ENCODE measurements at regions of chr3 and their contacts with region 1.

Region 1: DNA sequence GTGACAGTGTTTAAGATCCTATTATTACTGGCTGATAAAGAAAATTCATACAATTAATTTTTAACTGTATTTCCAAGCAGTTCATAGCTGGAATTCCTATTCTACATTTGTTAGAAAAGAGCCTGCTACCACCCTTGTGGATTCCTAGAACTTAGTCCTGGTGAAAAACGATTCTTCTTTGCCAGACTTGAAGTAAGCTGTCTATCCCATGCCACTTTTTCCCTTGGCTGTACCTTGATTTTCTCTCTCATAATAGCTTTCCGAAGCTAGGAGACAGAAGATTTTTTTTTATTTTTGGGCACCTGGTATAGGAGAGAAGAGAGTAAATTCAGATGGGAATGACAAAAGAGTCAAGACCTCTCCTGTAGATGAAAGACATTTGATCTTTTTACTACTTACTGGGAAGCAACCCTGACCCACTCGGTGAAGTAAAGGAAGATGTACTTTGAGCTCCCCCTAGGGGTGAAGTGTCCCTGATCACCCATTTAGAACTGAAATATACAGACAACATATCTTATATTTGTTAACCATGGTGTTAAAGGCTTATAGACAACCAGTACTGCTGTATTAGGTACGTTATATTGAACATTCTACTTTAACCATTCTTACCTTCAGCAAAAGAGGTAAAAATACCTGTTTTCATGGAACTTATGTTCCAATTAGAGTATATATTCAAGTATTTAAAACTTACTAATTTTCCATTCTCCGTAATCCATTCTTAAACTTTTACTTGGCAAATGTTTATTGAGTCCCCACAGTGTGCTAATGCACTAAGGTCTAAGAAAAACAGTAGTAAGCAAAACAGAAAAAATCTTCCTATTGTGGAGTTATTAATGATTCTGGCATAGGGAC is 36.2 kb upstream of the C3orf38 start:
- DNase-seq: peak; percentile 5 to 67
- H3K4me3 ChIP-seq: no peak overlapping the region
- H3K27ac ChIP-seq: no peak overlapping the region
- H3K4me1 ChIP-seq: no peaks in the 10 kb centered on the region
- H3K27me3 ChIP-seq: peaks cover 0 to 1% (median 0%) of the 10 kb centered on the region in 4 experiments; a peak in 1 of 7 replicates
- CTCF ChIP-seq: peak in 2 of 3 experiments; percentile 48 to 66; a peak in 2 of 4 replicates
- EP300 ChIP-seq: no peak
- POLR2A ChIP-seq: no peak
- RAD21 ChIP-seq: peak; percentile 67 to 71

Region 2: DNA sequence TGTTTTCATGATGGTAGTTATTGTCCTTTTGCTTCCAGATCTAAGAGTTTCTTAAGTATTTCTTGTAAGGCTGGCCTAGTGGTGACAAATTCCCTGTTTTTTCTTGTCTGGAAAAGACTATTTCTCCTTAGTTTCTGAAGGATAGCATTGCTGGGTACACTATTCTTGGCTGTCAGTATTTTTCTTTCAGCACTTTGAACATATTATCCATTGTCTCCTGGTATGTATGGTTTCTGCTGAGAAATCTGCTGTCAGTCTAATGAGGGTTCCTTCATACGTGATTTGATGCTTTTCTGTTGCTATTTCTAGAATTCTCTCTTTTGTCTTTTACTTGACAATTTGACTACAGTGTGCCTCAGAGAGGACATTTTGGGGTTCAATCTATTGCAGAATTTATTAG is 189.1 kb before region 1 on chr3:
- CTCF ChIA-PET with region 1: no interaction called
- POLR2A ChIA-PET with region 1: no interaction called
- DNase-seq: no peak
- H3K4me3 ChIP-seq: no peak overlapping the region
- H3K27ac ChIP-seq: no peak overlapping the region
- H3K4me1 ChIP-seq: no peaks in the 10 kb centered on the region
- H3K27me3 ChIP-seq: no peaks in the 10 kb centered on the region
- CTCF ChIP-seq: no peak
- EP300 ChIP-seq: no peak
- POLR2A ChIP-seq: no peak
- RAD21 ChIP-seq: no peak

Region 3: GRCh38 chr3:88092270-88092669 is 21.3 kb before region 1 on chr3:
- CTCF ChIA-PET with region 1: interaction called, 10 read pairs
- POLR2A ChIA-PET with region 1: no interaction called
- DNase-seq: no peak
- H3K4me3 ChIP-seq: no peak overlapping the region
- H3K27ac ChIP-seq: no peak overlapping the region
- H3K4me1 ChIP-seq: no peaks in the 10 kb centered on the region
- H3K27me3 ChIP-seq: no peaks in the 10 kb centered on the region
- CTCF ChIP-seq: no peak
- EP300 ChIP-seq: no peak
- POLR2A ChIP-seq: no peak
- RAD21 ChIP-seq: no peak

Measured in H1 (cell line).